Activated naive CD4-positive, alpha-beta T cell treated with anti-CD3 and anti-CD28 coated beads for 36 hours (primary cell): ENCODE measurements at regions of chr14 and their contacts with region 1.

Region 1: DNA sequence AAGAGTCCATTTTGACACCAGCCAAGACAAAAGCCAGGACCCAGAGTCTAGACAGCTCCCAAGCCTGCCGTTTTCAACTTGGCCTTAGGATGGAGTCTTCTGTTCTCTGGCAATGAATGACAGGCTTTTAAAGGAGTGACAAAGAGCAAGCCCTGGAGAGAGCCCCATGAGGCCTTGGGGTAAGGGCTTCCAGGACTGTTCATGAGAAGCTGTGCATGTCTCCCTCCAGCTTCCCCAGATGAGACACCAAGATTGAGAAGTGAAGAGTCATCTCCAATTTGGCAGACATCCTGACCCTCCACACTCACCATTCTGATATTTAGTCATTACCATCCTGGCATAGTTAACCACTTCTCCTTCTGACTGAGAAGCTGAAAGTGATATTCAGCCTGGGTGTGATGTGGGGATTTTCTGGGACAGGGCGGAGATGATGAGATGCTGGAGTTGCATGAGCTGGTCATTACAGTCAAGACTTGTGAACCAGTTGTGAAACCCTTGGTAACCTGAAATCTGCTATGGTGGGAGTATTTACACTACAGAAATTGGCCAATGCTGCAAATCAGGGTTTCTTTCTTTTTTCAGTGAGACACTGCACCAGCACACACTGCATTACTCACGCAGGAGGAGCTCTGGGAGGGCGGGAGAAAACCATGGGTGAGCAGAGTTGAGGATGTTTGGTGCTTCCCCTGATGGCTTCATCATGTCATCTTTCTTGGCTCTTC is 77.8 kb downstream of the VCPKMT start:
- DNase-seq: peak; percentile 92
- H3K4me3 Mint-ChIP-seq: peak overlapping the region; percentile 16
- H3K27ac Mint-ChIP-seq: peak overlapping the region; percentile 91
- H3K4me1 Mint-ChIP-seq: peaks cover 46% of the 10 kb centered on the region
- H3K27me3 Mint-ChIP-seq: no peaks in the 10 kb centered on the region

Region 2: DNA sequence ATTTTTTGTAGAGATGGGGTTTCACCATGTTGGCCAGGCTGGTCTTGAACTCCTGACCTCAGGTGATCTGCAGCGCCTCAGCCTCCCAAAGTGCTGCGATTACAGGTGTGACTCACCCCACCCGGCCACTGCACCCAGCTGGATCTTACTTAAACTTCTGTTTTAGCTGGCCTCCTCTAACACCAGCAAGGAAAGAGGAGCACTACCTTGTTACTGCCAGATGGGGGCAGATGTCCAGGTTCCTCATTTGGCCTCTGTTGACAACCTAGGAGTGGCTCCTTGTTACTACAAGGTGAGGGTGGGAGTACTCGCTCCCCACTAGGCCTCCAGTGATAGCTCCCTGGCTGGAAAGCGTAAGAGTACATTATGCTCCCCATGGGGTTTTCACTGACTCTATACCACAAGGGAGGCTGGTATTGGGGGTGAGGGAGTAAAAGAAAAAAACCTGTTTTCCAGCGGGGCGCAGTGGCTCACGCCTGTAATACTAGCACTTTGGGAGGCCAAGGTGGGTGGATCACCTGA is 158.8 kb before region 1 on chr14:
- CTCF ChIA-PET with region 1: interaction called, 3 read pairs
- intact Hi-C with region 1: loop called (anchors 1 kb)
- DNase-seq: peak; percentile 79
- H3K4me3 Mint-ChIP-seq: no peak overlapping the region
- H3K27ac Mint-ChIP-seq: peak overlapping the region; percentile 30
- H3K4me1 Mint-ChIP-seq: peaks cover 17% of the 10 kb centered on the region
- H3K27me3 Mint-ChIP-seq: no peaks in the 10 kb centered on the region

Region 3: GRCh38 chr14:49962621-49963020 is 75.9 kb before region 1 on chr14:
- CTCF ChIA-PET with region 1: no interaction called
- intact Hi-C with region 1: loop called (anchors 1 kb)
- DNase-seq: peak; percentile 85
- H3K4me3 Mint-ChIP-seq: no peak overlapping the region
- H3K27ac Mint-ChIP-seq: peak overlapping the region; percentile 66
- H3K4me1 Mint-ChIP-seq: peaks cover 42% of the 10 kb centered on the region
- H3K27me3 Mint-ChIP-seq: no peaks in the 10 kb centered on the region

Region 4: GRCh38 chr14:50003213-50004031 is 35.1 kb before region 1 on chr14:
- CTCF ChIA-PET with region 1: interaction called, 23 read pairs
- intact Hi-C with region 1: loop called (anchors 1 kb)
- DNase-seq: peak; percentile 86
- H3K4me3 Mint-ChIP-seq: peak overlapping the region; percentile 92
- H3K27ac Mint-ChIP-seq: peak overlapping the region; percentile 98
- H3K4me1 Mint-ChIP-seq: peaks cover 42% of the 10 kb centered on the region
- H3K27me3 Mint-ChIP-seq: no peaks in the 10 kb centered on the region

Region 5: GRCh38 chr14:50085570-50086320 is 47.2 kb after region 1 on chr14:
- CTCF ChIA-PET with region 1: interaction called, 22 read pairs
- intact Hi-C with region 1: loop called (anchors 1 kb)
- DNase-seq: peak; percentile 77
- H3K4me3 Mint-ChIP-seq: peak overlapping the region; percentile 6
- H3K27ac Mint-ChIP-seq: peak overlapping the region; percentile 83
- H3K4me1 Mint-ChIP-seq: peaks cover 93% of the 10 kb centered on the region
- H3K27me3 Mint-ChIP-seq: no peaks in the 10 kb centered on the region

Region 6: DNA sequence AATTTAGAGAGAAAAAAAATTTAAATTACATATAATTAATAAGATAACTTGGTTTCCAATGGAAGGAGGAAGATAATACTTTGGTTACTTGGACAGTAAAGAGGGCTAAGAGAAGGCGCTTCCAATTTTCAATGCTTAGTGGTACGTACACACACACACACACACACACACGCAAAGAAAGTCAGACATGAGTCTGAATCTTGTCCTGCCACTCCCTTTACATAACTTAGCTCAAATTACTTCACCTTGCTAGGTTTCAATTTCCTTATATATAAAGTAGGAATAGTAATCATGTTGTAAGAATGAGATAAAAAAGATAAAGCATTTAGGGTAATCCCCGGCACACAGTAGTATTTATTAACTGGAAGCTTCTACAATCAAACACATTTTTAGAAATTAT is 117.6 kb after region 1 on chr14:
- CTCF ChIA-PET with region 1: no interaction called
- intact Hi-C with region 1: no loop called
- DNase-seq: no peak
- H3K4me3 Mint-ChIP-seq: no peak overlapping the region
- H3K27ac Mint-ChIP-seq: no peak overlapping the region
- H3K4me1 Mint-ChIP-seq: no peaks in the 10 kb centered on the region
- H3K27me3 Mint-ChIP-seq: no peaks in the 10 kb centered on the region

Region 7: DNA sequence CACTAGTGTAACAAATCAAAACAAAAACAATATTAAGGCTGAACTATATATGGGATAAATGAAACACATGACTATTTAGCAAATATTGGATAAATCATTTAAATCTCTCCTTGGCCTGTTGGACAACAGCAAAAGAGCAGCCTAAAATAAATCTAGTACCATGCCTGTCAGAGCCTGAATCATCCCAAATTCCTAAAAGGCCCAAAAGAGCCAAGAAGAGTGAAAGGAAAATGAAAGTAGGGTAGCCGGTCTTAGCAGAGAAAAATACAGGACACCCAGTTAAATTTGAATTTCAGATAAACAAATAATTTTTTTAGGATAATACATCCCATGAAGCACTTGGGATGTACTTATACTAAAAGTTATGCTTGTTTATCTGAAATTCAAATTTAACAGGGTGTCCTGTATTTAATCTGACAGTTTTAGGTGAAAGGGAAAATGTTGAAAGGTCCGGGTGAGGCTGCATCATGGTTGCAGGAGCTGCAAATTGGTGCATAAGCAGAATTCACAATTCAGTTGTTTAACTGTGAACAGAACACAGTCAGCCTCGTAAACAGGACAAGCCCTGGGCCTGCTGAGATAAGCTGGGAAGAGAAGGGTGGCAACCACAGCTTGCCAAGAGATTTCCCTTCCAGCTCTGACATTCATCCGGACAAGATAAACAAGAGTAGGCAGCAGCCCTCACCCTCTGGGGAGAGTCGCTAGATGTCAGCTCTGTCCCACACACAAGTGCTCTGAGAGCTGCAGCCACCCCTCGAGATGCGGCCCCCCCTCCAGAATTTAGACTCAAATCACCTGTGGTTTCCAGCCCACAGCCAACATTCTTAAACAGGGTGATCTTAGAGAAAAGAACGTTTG is 303.9 kb after region 1 on chr14:
- CTCF ChIA-PET with region 1: no interaction called
- intact Hi-C with region 1: loop called (anchors 1 kb)
- DNase-seq: peak; percentile 79
- H3K4me3 Mint-ChIP-seq: no peak overlapping the region
- H3K27ac Mint-ChIP-seq: no peak overlapping the region
- H3K4me1 Mint-ChIP-seq: peaks cover 26% of the 10 kb centered on the region
- H3K27me3 Mint-ChIP-seq: no peaks in the 10 kb centered on the region